ENCODE measurements at regions of chr2 and their contacts with region 1.

Region 1: DNA sequence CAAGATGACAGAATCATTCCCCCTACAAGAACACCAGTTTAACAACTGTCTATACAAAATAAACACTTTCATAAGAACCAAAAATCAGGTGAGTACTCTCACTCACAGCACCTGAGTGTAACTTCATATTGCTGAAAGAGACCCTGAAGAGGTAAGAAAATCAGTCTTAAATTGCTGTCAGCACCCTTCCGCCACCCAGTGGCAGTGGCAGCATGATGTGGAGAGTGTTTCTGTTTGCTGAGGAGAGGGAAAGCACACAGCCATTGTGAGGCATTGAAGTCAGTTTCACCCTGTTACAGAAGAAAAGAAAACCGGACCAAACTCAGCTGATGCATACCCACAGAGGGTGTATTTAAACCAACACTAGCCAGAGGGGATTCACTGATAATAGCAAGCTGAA is 1240.8 kb upstream of the CRIM1 start:
- DNase-seq: peak; percentile 29
- H3K4me3 Mint-ChIP-seq: no peak overlapping the region
- H3K27ac Mint-ChIP-seq: no peak overlapping the region
- H3K4me1 Mint-ChIP-seq: no peaks in the 10 kb centered on the region
- H3K27me3 Mint-ChIP-seq: peaks cover 31% of the 10 kb centered on the region
- CTCF ChIP-seq: peak; percentile 28

Region 2: DNA sequence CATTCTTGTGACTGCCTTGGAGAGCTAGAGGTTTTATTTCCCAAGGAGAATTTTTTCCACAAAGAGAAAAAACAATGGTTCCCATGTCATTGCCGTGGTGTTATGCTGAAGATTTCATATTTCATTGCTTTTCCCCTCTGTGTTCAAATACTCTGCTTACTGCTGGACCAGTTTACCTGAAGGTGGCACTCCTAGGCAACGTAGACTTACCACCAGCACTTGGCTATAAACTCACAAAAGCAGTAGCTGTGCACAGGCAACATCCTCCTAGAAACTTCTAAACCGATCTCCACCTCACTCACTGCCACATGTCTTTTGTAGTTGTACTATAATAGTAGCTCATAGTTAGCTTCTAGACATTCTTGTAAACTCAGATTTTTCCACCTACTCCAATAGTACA is 78.9 kb before region 1 on chr2:
- CTCF ChIA-PET with region 1: no interaction called
- POLR2A ChIA-PET with region 1: no interaction called
- intact Hi-C with region 1: loop called (anchors 1 kb)
- DNase-seq: peak; percentile 34
- H3K4me3 Mint-ChIP-seq: no peak overlapping the region
- H3K27ac Mint-ChIP-seq: no peak overlapping the region
- H3K4me1 Mint-ChIP-seq: no peaks in the 10 kb centered on the region
- H3K27me3 Mint-ChIP-seq: peaks cover 46% of the 10 kb centered on the region
- CTCF ChIP-seq: no peak

Region 3: GRCh38 chr2:35099340-35099739 is 15.4 kb before region 1 on chr2:
- CTCF ChIA-PET with region 1: no interaction called
- POLR2A ChIA-PET with region 1: no interaction called
- intact Hi-C with region 1: no loop called
- DNase-seq: no peak
- H3K4me3 Mint-ChIP-seq: no peak overlapping the region
- H3K27ac Mint-ChIP-seq: no peak overlapping the region
- H3K4me1 Mint-ChIP-seq: no peaks in the 10 kb centered on the region
- H3K27me3 Mint-ChIP-seq: peaks cover 61% of the 10 kb centered on the region
- CTCF ChIP-seq: no peak

Region 4: GRCh38 chr2:35688309-35688708 is 573.5 kb after region 1 on chr2:
- CTCF ChIA-PET with region 1: no interaction called
- POLR2A ChIA-PET with region 1: no interaction called
- intact Hi-C with region 1: no loop called
- DNase-seq: no peak
- H3K4me3 Mint-ChIP-seq: no peak overlapping the region
- H3K27ac Mint-ChIP-seq: no peak overlapping the region
- H3K4me1 Mint-ChIP-seq: no peaks in the 10 kb centered on the region
- H3K27me3 Mint-ChIP-seq: peaks cover 54% of the 10 kb centered on the region
- CTCF ChIP-seq: no peak